ENCODE measurements at regions of chr15 and their contacts with region 1.

Region 1: GRCh38 chr15:73972984-73973682 is 19.0 kb downstream of the STOML1 start:
- DNase-seq: no peak
- ATAC-seq: peak; percentile 97
- H3K4me3 ChIP-seq: no peak overlapping the region
- H3K27ac ChIP-seq: no peak overlapping the region
- H3K4me1 ChIP-seq: peaks cover 6% of the 10 kb centered on the region; the same call in 1 of the 2 replicates
- H3K27me3 ChIP-seq: no peaks in the 10 kb centered on the region
- CTCF ChIP-seq: peak; percentile 89 to 99 (median 93); a peak in 5 of 6 replicates
- EP300 ChIP-seq: no peak
- POLR2A ChIP-seq: no peak
- RAD21 ChIP-seq: peak; percentile 98

Region 2: DNA sequence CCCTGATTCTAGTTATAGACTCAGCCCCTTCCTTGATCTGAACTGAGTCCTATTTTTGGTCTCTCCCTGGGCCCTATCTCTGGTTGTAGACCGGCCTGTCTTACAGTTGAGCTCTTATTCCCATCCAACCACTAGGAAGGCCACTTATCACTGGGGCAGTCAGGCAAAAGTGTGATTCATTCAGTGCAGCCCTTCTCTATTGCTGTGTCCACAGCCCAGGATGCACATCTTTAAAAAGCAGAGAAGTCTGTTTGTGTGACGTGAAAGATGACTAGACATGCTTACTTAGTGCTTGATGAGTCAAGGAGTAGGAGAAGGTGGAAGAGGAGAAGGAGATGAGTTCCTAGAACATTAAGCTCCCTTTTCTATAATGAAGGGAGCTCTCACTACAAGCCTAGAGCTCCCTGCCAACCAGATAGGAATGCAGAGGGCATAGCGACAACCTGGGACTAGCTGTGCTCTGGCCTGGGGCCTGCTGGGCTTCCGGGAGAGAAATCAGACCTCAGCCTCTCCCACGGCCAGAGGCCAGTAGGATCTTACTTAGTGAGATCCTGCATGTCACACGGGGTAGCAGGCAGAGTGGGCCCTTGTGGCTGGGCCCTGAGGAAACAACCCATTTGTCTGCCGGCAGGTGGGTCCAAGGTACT is 245.7 kb before region 1 on chr15:
- CTCF ChIA-PET with region 1: no interaction called
- POLR2A ChIA-PET with region 1: no interaction called
- RAD21 ChIA-PET with region 1: no interaction called
- SMC1A ChIA-PET with region 1: no interaction called
- in situ Hi-C with region 1: no loop called
- intact Hi-C with region 1: no loop called
- DNase-seq: no peak
- ATAC-seq: no peak
- H3K4me3 ChIP-seq: no peak overlapping the region
- H3K27ac ChIP-seq: no peak overlapping the region
- H3K4me1 ChIP-seq: no peaks in the 10 kb centered on the region
- H3K27me3 ChIP-seq: peaks cover 1 to 3% of the 10 kb centered on the region in 2 experiments
- CTCF ChIP-seq: no peak
- EP300 ChIP-seq: no peak
- POLR2A ChIP-seq: no peak
- RAD21 ChIP-seq: no peak

Region 3: GRCh38 chr15:73741321-73741836 is 231.8 kb before region 1 on chr15:
- CTCF ChIA-PET with region 1: no interaction called
- POLR2A ChIA-PET with region 1: no interaction called
- RAD21 ChIA-PET with region 1: no interaction called
- SMC1A ChIA-PET with region 1: no interaction called
- in situ Hi-C with region 1: no loop called
- intact Hi-C with region 1: no loop called
- DNase-seq: no peak
- ATAC-seq: no peak
- H3K4me3 ChIP-seq: no peak overlapping the region
- H3K27ac ChIP-seq: no peak overlapping the region
- H3K4me1 ChIP-seq: no peaks in the 10 kb centered on the region
- H3K27me3 ChIP-seq: peaks cover 0 to 3% of the 10 kb centered on the region in 2 experiments; a peak in 3 of 4 replicates
- CTCF ChIP-seq: no peak
- EP300 ChIP-seq: no peak
- POLR2A ChIP-seq: no peak
- RAD21 ChIP-seq: no peak

Region 4: GRCh38 chr15:73950831-73951561 is 22.1 kb before region 1 on chr15:
- CTCF ChIA-PET with region 1: interaction called, 10 read pairs
- POLR2A ChIA-PET with region 1: no interaction called
- RAD21 ChIA-PET with region 1: interaction called, 8 read pairs
- SMC1A ChIA-PET with region 1: no interaction called
- in situ Hi-C with region 1: no loop called
- intact Hi-C with region 1: no loop called
- DNase-seq: no peak
- ATAC-seq: peak; percentile 97
- H3K4me3 ChIP-seq: no peak overlapping the region
- H3K27ac ChIP-seq: no peak overlapping the region
- H3K4me1 ChIP-seq: no peaks in the 10 kb centered on the region
- H3K27me3 ChIP-seq: no peaks in the 10 kb centered on the region; a peak in 1 of 4 replicates
- CTCF ChIP-seq: peak; percentile 63 to 77 (median 72)
- EP300 ChIP-seq: no peak
- POLR2A ChIP-seq: no peak
- RAD21 ChIP-seq: peak; percentile 74

Region 5: DNA sequence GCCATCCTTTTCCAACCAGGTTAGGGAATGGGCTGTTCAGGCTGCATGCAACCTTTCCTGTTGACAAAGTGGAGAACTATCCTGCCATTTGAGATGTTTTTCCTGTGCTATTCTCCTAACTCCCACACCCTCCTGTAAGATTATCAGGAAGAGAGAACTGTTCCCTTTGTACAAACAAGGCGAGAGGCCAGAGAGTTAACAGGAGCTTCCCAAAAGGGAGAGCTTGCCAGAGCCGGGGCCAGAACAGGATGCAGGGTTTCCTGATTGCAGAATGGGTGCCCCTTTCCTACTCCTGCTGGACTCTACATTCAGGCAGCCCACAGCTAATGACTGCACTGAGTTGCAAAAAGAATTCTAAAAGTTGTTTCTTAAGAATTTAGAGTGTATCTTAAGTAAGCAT is 38.5 kb after region 1 on chr15:
- CTCF ChIA-PET with region 1: interaction called, 10 read pairs
- POLR2A ChIA-PET with region 1: no interaction called
- RAD21 ChIA-PET with region 1: interaction called, 6 read pairs
- SMC1A ChIA-PET with region 1: interaction called, 7 read pairs
- in situ Hi-C with region 1: no loop called
- intact Hi-C with region 1: no loop called
- DNase-seq: no peak
- ATAC-seq: no peak
- H3K4me3 ChIP-seq: no peak overlapping the region
- H3K27ac ChIP-seq: no peak overlapping the region
- H3K4me1 ChIP-seq: peaks cover 15% of the 10 kb centered on the region
- H3K27me3 ChIP-seq: no peaks in the 10 kb centered on the region
- CTCF ChIP-seq: no peak
- EP300 ChIP-seq: no peak
- POLR2A ChIP-seq: no peak
- RAD21 ChIP-seq: no peak

Region 6: GRCh38 chr15:74036271-74037170 is 63.4 kb after region 1 on chr15:
- CTCF ChIA-PET with region 1: interaction called, 12 read pairs
- POLR2A ChIA-PET with region 1: interaction called, 4 read pairs
- RAD21 ChIA-PET with region 1: interaction called, 28 read pairs
- SMC1A ChIA-PET with region 1: interaction called, 7 read pairs
- in situ Hi-C with region 1: no loop called
- intact Hi-C with region 1: no loop called
- DNase-seq: no peak
- ATAC-seq: no peak
- H3K4me3 ChIP-seq: no peak overlapping the region
- H3K27ac ChIP-seq: no peak overlapping the region
- H3K4me1 ChIP-seq: no peaks in the 10 kb centered on the region
- H3K27me3 ChIP-seq: no peaks in the 10 kb centered on the region
- CTCF ChIP-seq: peak; percentile 23 to 32 (median 23); a peak in 3 of 6 replicates
- EP300 ChIP-seq: no peak
- POLR2A ChIP-seq: peak; percentile 56
- RAD21 ChIP-seq: 0 out of 2 replicates have a peak, but pooled peaks have one; percentile 30

Region 7: GRCh38 chr15:74053941-74054529 is 80.9 kb after region 1 on chr15:
- CTCF ChIA-PET with region 1: interaction called, 61 read pairs
- POLR2A ChIA-PET with region 1: no interaction called
- RAD21 ChIA-PET with region 1: interaction called, 20 read pairs
- SMC1A ChIA-PET with region 1: interaction called, 18 read pairs
- in situ Hi-C with region 1: no loop called
- intact Hi-C with region 1: loop called (anchors 5 kb)
- DNase-seq: peak; percentile 21
- ATAC-seq: peak; percentile 98
- H3K4me3 ChIP-seq: no peak overlapping the region
- H3K27ac ChIP-seq: no peak overlapping the region
- H3K4me1 ChIP-seq: no peaks in the 10 kb centered on the region
- H3K27me3 ChIP-seq: 0 out of 4 replicates have a peak, but pooled peaks cover 0 to 2% of the 10 kb centered on the region in 2 experiments
- CTCF ChIP-seq: peak; percentile 40 to 79 (median 57); a peak in 5 of 6 replicates
- EP300 ChIP-seq: no peak
- POLR2A ChIP-seq: no peak
- RAD21 ChIP-seq: peak; percentile 52

Region 8: GRCh38 chr15:74322181-74323076 is 349.3 kb after region 1 on chr15:
- CTCF ChIA-PET with region 1: interaction called, 63 read pairs
- POLR2A ChIA-PET with region 1: no interaction called
- RAD21 ChIA-PET with region 1: interaction called, 11 read pairs
- SMC1A ChIA-PET with region 1: interaction called, 6 read pairs
- in situ Hi-C with region 1: no loop called
- intact Hi-C with region 1: loop called (anchors 2 kb)
- DNase-seq: no peak
- ATAC-seq: peak; percentile 95
- H3K4me3 ChIP-seq: no peak overlapping the region
- H3K27ac ChIP-seq: no peak overlapping the region
- H3K4me1 ChIP-seq: peaks cover 30% of the 10 kb centered on the region
- H3K27me3 ChIP-seq: no peaks in the 10 kb centered on the region
- CTCF ChIP-seq: peak; percentile 94 to 96 (median 94)
- EP300 ChIP-seq: no peak
- POLR2A ChIP-seq: no peak
- RAD21 ChIP-seq: peak; percentile 91